OCI-LY7 (cell line): ENCODE measurements at regions of chr11 and their contacts with region 1.

Region 1: GRCh38 chr11:47932544-47932943 is 47.8 kb upstream of the PTPRJ start:
- DNase-seq: no peak
- H3K4me3 ChIP-seq: no peak overlapping the region
- H3K27ac ChIP-seq: no peak overlapping the region
- H3K4me1 ChIP-seq: peaks cover 47% of the 10 kb centered on the region
- CTCF ChIP-seq: no peak

Region 2: GRCh38 chr11:47992959-47993820 is 60.6 kb after region 1 on chr11:
- CTCF ChIA-PET with region 1: interaction called, 4 read pairs
- POLR2A ChIA-PET with region 1: interaction called, 10 read pairs
- intact Hi-C with region 1: no loop called
- DNase-seq: no peak
- H3K4me3 ChIP-seq: no peak overlapping the region
- H3K27ac ChIP-seq: no peak overlapping the region
- H3K4me1 ChIP-seq: peaks cover 63% of the 10 kb centered on the region
- CTCF ChIP-seq: no peak

Region 3: DNA sequence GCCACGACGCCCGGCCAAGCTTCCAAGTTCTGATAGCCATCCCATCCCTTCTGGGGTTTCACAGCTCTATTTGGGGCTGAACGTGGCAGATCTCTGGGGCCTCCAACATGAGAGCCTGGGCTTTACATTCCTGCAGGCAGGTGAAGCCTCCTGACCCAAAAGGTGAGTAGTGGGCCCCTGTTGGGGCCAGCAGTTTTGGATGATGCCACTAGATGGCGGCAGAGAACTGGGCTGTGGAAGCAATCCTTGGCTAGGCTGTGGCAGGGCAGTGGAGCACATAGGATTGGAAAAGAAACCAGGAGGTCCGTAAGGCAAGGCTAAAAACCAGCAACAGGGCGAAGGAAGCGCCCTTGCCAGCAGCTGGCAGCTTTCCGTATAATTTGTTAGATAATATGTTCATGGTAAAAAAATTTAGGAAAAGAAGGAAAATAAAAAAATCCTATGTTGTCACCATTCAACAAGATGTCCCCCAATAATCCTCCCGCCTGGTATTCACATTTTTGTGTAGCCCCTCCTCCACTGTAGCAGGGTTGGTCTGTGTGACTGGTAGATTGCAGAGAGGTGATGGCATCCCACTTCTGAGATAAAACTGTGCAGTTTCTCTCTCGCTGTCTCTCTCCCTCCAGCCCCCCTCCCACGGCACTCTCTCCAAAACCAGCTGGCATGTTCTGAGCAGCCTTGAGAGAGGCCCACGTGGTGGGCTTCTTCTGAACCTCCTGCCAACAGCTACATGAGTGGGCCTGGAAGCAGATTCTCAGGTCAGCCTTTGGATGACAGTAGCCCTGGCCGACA is 240.5 kb after region 1 on chr11:
- CTCF ChIA-PET with region 1: no interaction called
- POLR2A ChIA-PET with region 1: no interaction called
- intact Hi-C with region 1: loop called (anchors 2 kb)
- DNase-seq: peak; percentile 60
- H3K4me3 ChIP-seq: no peak overlapping the region
- H3K27ac ChIP-seq: no peak overlapping the region
- H3K4me1 ChIP-seq: peaks cover 12% of the 10 kb centered on the region
- CTCF ChIP-seq: peak; percentile 92